B cell (primary cell): ENCODE measurements at regions of chr6 and their contacts with region 1.

Region 1: DNA sequence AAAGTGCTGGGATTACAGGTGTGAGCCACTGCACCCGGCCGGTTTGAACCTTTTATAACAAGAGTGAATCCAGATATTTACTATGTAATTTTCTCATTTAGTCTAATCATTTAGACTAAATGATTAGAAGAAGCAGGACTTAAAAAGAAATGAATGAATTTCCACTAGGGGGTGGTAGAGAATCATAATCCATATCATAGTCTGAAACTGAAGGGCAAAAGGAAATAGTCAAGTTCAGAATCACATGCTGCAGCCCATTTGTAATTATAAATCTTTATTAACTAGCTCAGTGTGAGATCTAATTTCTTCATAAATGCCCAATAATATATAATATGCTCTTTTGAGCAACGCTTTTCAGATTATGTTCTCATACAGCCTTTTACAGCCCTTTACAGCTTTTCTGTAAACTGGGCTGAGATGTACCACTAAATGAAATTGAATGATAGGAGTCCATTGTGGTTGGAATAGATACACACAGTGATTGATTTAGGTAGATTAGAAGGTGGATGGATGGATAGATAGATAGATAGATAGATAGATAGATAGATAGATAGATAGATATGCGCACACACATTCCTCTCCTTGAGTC is 31.8 kb downstream of the PSMB9 start:
- DNase-seq: peak; percentile 87
- ATAC-seq: peak; percentile 65
- H3K4me3 ChIP-seq: no peak overlapping the region
- H3K4me3 Mint-ChIP-seq: no peak overlapping the region
- H3K27ac ChIP-seq: no peak overlapping the region
- H3K27ac Mint-ChIP-seq: no peak overlapping the region
- H3K4me1 ChIP-seq: peaks cover 14 to 15% of the 10 kb centered on the region in 2 donors
- H3K4me1 Mint-ChIP-seq: peaks cover 23% of the 10 kb centered on the region
- H3K27me3 ChIP-seq: no peaks in the 10 kb centered on the region
- H3K27me3 Mint-ChIP-seq: no peaks in the 10 kb centered on the region
- CTCF ChIP-seq: peak; percentile 78

Region 2: DNA sequence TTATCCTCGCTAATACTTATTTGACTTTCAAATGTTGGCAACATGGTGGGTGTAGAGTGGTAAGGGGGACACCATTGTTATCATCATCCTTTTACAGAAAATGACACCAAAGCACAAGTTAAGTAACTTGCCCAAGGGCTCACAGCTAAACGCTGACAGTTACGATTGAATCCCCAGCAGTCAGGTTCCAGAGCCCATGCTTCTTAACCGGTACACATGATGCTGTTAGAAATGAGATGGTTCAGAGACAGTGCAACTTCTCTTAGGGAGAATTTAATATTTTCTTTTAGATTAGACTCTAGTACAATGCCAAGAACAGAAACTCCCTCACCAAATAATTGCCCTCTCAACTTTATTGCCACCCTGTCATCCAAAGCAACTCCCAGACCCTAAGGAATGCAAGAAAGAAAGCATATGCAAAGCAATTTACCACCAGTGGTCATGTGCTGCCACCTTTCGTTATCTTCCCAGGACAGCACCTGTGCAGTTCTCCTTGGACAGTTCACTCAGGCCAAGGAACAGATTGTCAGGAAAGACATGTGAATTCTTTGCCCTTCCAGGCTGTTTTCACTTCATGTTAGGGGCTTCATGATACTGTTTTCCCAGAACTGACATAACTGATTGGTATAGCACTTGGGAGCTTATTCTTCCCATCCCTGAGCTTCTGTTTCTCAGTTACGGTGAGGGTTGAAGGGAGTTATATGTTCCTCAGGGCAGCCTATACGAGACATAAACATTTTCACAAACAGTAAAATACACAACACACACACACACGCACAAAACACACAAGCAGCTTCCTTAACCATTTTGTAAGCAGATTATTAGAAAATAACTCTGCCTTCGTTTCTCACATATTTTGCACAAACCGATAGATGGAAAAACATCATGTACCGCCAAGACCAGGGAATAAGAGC is 62.0 kb after region 1 on chr6:
- CTCF ChIA-PET with region 1: interaction called, 57 read pairs
- POLR2A ChIA-PET with region 1: interaction called, 6 read pairs
- intact Hi-C with region 1: loop called (anchors 1 kb)
- DNase-seq: peak; percentile 76
- ATAC-seq: no peak
- H3K4me3 ChIP-seq: peak overlapping the region in 3 of 5 experiments; percentile 2 to 35 (median 6)
- H3K4me3 Mint-ChIP-seq: peak overlapping the region; percentile 84
- H3K27ac ChIP-seq: peak overlapping the region; percentile 97 to 98
- H3K27ac Mint-ChIP-seq: peak overlapping the region; percentile 92
- H3K4me1 ChIP-seq: peaks cover 80 to 94% of the 10 kb centered on the region in 2 donors
- H3K4me1 Mint-ChIP-seq: peaks cover 86% of the 10 kb centered on the region
- H3K27me3 ChIP-seq: no peaks in the 10 kb centered on the region
- H3K27me3 Mint-ChIP-seq: no peaks in the 10 kb centered on the region
- CTCF ChIP-seq: peak; percentile 70

Region 3: GRCh38 chr6:32952817-32953739 is 67.3 kb after region 1 on chr6 and contains the start of gene HLA-DMA:
- CTCF ChIA-PET with region 1: interaction called, 48 read pairs
- POLR2A ChIA-PET with region 1: interaction called, 6 read pairs
- intact Hi-C with region 1: loop called (anchors 2 kb)
- DNase-seq: peak; percentile 97
- ATAC-seq: peak; percentile 91
- H3K4me3 ChIP-seq: peak within 1 kb of the TSS; percentile 72 to 98 (median 93)
- H3K4me3 Mint-ChIP-seq: peak within 1 kb of the TSS; percentile 96
- H3K27ac ChIP-seq: peak within 1 kb of the TSS; percentile 91 to 92
- H3K27ac Mint-ChIP-seq: peak within 1 kb of the TSS; percentile 98
- H3K4me1 ChIP-seq: peaks cover 70 to 84% of the 10 kb centered on the region in 2 donors
- H3K4me1 Mint-ChIP-seq: peaks cover 85% of the 10 kb centered on the region
- H3K27me3 ChIP-seq: no peaks in the 10 kb centered on the region
- H3K27me3 Mint-ChIP-seq: no peaks in the 10 kb centered on the region
- CTCF ChIP-seq: peak; percentile 88
- total RNA-seq, gene HLA-DMA: 554 and 558 TPM in 2 replicates

Region 4: GRCh38 chr6:32964776-32965175 is 79.0 kb after region 1 on chr6:
- CTCF ChIA-PET with region 1: interaction called, 43 read pairs
- POLR2A ChIA-PET with region 1: interaction called, 6 read pairs
- intact Hi-C with region 1: loop called (anchors 1 kb)
- DNase-seq: no peak
- ATAC-seq: no peak
- H3K4me3 ChIP-seq: no peak overlapping the region
- H3K4me3 Mint-ChIP-seq: no peak overlapping the region
- H3K27ac ChIP-seq: no peak overlapping the region
- H3K27ac Mint-ChIP-seq: peak overlapping the region; percentile 68
- H3K4me1 ChIP-seq: peaks cover 26 to 28% of the 10 kb centered on the region in 2 donors
- H3K4me1 Mint-ChIP-seq: peaks cover 50% of the 10 kb centered on the region
- H3K27me3 ChIP-seq: no peaks in the 10 kb centered on the region
- H3K27me3 Mint-ChIP-seq: no peaks in the 10 kb centered on the region
- CTCF ChIP-seq: no peak